Activated T-helper 1 cell treated with anti-CD3 and anti-CD28 coated beads, Interleukin-12 subunit alpha, Interleukin-12 subunit beta, Interleukin-2, Interleukin-4 antibody, amounts not matched to agents 30 ng/mL and 10 ng/mL and 1 ng/mL, durations not matched to agents 14 hours and 24 hours and 36 hours (primary cell): ENCODE measurements at regions of chr15 and their contacts with region 1.

Region 1: GRCh38 chr15:50182219-50183013 is 420 bp downstream of the SLC27A2 start:
- DNase-seq: peak; percentile 53
- H3K4me3 Mint-ChIP-seq: peak overlapping the region; percentile 96
- H3K27ac Mint-ChIP-seq: peak overlapping the region; percentile 88
- H3K4me1 Mint-ChIP-seq: peaks cover 60% of the 10 kb centered on the region
- H3K27me3 Mint-ChIP-seq: no peaks in the 10 kb centered on the region

Region 2: GRCh38 chr15:50107591-50108408 is 74.6 kb before region 1 on chr15:
- intact Hi-C with region 1: loop called (anchors 2 kb)
- DNase-seq: peak; percentile 44
- H3K4me3 Mint-ChIP-seq: peak overlapping the region; percentile 75
- H3K27ac Mint-ChIP-seq: peak overlapping the region; percentile 93
- H3K4me1 Mint-ChIP-seq: peaks cover 93% of the 10 kb centered on the region
- H3K27me3 Mint-ChIP-seq: no peaks in the 10 kb centered on the region

Region 3: DNA sequence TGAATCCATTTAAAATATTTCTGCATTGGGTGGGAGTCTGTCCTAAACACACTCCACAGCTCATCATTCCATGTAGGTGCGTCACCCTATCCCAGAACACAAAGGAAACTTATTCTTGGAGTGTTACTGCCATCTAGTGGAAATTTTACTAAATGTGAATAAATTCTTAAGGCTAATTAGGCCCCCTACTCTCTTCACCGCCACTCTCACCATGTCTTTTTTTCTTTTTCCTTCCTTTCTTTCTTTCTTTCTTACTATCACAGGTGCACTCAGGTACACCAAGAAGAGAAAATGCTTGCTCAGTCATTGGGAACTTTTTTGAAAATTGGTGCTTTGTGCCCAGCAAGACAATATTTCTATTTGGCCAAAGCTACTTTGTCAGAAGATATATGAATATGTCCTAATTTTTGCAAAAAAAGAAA is 37.0 kb before region 1 on chr15:
- intact Hi-C with region 1: loop called (anchors 2 kb)
- DNase-seq: no peak
- H3K4me3 Mint-ChIP-seq: no peak overlapping the region
- H3K27ac Mint-ChIP-seq: no peak overlapping the region
- H3K4me1 Mint-ChIP-seq: peaks cover 62% of the 10 kb centered on the region
- H3K27me3 Mint-ChIP-seq: no peaks in the 10 kb centered on the region

Region 4: GRCh38 chr15:50247819-50248655 is 65.6 kb after region 1 on chr15:
- intact Hi-C with region 1: loop called (anchors 2 kb)
- DNase-seq: peak; percentile 59
- H3K4me3 Mint-ChIP-seq: peak overlapping the region; percentile 67
- H3K27ac Mint-ChIP-seq: peak overlapping the region; percentile 97
- H3K4me1 Mint-ChIP-seq: peaks cover 65% of the 10 kb centered on the region
- H3K27me3 Mint-ChIP-seq: no peaks in the 10 kb centered on the region

Region 5: GRCh38 chr15:50315814-50316630 is 133.6 kb after region 1 on chr15:
- intact Hi-C with region 1: loop called (anchors 1 kb)
- DNase-seq: no peak
- H3K4me3 Mint-ChIP-seq: no peak overlapping the region
- H3K27ac Mint-ChIP-seq: no peak overlapping the region
- H3K4me1 Mint-ChIP-seq: peaks cover 44% of the 10 kb centered on the region
- H3K27me3 Mint-ChIP-seq: no peaks in the 10 kb centered on the region

Region 6: GRCh38 chr15:50424066-50424890 is 241.9 kb after region 1 on chr15 and contains the start of gene USP8:
- intact Hi-C with region 1: loop called (anchors 2 kb)
- DNase-seq: peak; percentile 92
- H3K4me3 Mint-ChIP-seq: peak within 1 kb of the TSS; percentile 98
- H3K27ac Mint-ChIP-seq: peak within 1 kb of the TSS; percentile 92
- H3K4me1 Mint-ChIP-seq: peaks cover 25% of the 10 kb centered on the region
- H3K27me3 Mint-ChIP-seq: no peaks in the 10 kb centered on the region
- total RNA-seq, gene USP8: 66.2 and 66.3 TPM in 2 replicates